AG04450 (cell line): ENCODE measurements at regions of chr14 and their contacts with region 1.

Region 1: DNA sequence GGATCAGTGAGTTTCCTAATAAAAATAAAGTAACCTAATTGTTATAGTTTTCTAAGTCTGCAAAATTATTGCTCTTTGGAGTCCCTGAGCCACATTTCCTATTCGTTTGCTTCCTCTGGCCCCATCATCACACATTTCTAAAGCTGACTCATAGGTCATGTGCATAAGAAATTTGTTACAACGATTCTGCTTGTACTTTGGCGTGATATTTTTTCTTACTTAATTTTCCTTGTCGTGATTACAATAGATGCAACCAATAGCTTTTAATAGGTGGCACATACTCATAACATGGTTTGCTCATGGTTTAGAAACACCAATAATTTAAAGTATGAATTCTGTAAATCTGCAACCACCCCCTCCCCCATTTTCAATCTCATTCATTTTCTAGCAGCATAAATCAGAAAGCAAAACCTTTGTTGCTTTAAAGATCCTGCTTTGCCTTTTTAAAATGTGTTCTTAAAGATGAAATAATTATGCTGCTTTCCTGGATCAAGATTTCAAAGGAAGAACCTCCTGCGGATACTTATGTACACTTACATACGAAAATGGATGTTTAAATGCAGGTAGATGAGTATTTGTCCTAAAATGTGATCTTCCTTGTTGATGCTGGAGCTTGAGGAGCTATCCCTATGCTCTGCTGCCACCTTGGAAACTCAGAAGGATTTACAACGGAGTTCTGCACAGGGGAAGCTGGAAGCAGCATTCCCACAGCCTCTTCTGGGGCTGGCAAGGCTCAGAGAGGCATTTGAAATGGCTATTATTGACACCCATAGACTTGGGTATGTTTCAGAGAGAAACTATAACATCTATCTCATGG is 1.7 kb upstream of the FLRT2 start:
- DNase-seq: no peak
- H3K4me3 ChIP-seq: peak overlapping the region; percentile 82
- H3K27ac ChIP-seq: peak overlapping the region; percentile 73
- H3K27me3 ChIP-seq: no peaks in the 10 kb centered on the region
- CTCF ChIP-seq: peak; percentile 78

Region 2: DNA sequence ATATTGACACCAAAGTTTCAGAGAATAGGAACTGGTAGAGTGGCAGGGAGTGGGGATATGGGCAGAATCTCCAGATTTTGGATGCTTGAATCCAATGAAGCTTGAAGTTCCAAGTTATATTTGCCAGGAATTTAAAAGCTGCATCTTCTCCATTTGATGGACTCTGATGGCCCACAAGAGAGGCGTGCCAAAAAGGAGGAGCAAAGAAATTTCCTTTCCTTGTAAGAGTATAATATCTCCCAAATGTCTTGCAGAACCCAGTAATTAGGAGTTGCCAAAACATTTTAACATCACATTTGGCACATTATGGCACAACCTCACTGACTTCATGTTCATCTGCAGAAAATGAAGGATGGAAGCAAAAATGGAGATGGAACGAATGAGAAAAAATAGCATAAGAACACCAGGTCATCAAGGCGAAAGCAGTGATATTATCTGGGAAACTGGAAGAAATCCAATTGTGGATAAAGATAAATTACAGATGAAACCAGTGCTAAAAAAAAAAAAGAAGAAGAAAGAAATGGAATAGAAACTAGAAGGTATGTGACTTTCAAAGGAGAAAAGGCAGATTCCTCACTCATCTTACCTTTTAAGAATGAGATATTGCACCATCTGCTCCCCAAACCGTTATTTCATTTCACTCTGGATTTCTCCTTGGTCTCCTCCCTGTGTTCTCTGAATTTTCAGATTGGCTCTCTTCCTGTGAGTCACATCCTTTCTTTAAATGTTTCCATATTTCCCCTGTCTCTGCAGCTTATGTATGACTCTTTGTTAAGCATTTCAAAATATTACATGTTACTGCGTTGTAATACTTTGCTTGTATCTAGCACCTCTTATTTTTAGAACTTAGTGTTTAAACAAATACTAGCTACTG is 11.8 kb before region 1 on chr14:
- CTCF ChIA-PET with region 1: interaction called, 16 read pairs
- POLR2A ChIA-PET with region 1: interaction called, 3 read pairs
- DNase-seq: no peak
- H3K4me3 ChIP-seq: no peak overlapping the region
- H3K27ac ChIP-seq: no peak overlapping the region
- H3K27me3 ChIP-seq: no peaks in the 10 kb centered on the region
- CTCF ChIP-seq: no peak

Region 3: DNA sequence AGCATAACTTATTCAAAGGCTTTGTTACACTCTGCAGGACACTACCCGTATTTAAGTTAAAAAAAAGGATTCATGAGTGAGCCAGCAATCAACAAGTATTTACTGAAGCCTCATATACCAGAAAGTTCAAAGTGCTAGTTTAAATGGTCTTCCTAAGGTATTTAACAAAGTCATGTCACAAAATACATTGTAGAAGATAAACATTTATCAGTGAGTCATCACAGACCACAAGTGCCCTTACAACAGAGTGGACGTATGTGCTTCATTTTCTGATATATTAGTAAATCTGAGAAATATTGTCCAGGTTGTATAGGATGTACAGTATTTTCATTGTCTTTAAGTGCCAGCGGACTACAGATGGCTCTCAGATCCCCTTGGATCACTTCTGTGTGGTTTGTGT is 25.8 kb after region 1 on chr14:
- CTCF ChIA-PET with region 1: no interaction called
- POLR2A ChIA-PET with region 1: no interaction called
- DNase-seq: no peak
- H3K4me3 ChIP-seq: no peak overlapping the region
- H3K27ac ChIP-seq: no peak overlapping the region
- H3K27me3 ChIP-seq: no peaks in the 10 kb centered on the region
- CTCF ChIP-seq: no peak

Region 4: GRCh38 chr14:85607651-85608081 is 79.4 kb after region 1 on chr14:
- CTCF ChIA-PET with region 1: interaction called, 26 read pairs
- POLR2A ChIA-PET with region 1: no interaction called
- DNase-seq: peak; percentile 49
- H3K4me3 ChIP-seq: no peak overlapping the region
- H3K27ac ChIP-seq: peak overlapping the region; percentile 73
- H3K27me3 ChIP-seq: no peaks in the 10 kb centered on the region
- CTCF ChIP-seq: no peak

Region 5: GRCh38 chr14:85873006-85873405 is 344.7 kb after region 1 on chr14:
- CTCF ChIA-PET with region 1: interaction called, 10 read pairs
- POLR2A ChIA-PET with region 1: no interaction called
- DNase-seq: no peak
- H3K4me3 ChIP-seq: no peak overlapping the region
- H3K27ac ChIP-seq: no peak overlapping the region
- H3K27me3 ChIP-seq: no peaks in the 10 kb centered on the region
- CTCF ChIP-seq: no peak

Region 6: GRCh38 chr14:85991156-85991555 is 462.9 kb after region 1 on chr14:
- CTCF ChIA-PET with region 1: no interaction called
- POLR2A ChIA-PET with region 1: no interaction called
- DNase-seq: no peak
- H3K4me3 ChIP-seq: no peak overlapping the region
- H3K27ac ChIP-seq: no peak overlapping the region
- H3K27me3 ChIP-seq: no peaks in the 10 kb centered on the region
- CTCF ChIP-seq: no peak